Activated CD4-positive, alpha-beta memory T cell treated with anti-CD3 and anti-CD28 coated beads, Interleukin-2, amount 10 ng/mL, durations not matched to agents 7 days and 5 days (primary cell): ENCODE measurements at regions of chr2 and their contacts with region 1.

Region 1: DNA sequence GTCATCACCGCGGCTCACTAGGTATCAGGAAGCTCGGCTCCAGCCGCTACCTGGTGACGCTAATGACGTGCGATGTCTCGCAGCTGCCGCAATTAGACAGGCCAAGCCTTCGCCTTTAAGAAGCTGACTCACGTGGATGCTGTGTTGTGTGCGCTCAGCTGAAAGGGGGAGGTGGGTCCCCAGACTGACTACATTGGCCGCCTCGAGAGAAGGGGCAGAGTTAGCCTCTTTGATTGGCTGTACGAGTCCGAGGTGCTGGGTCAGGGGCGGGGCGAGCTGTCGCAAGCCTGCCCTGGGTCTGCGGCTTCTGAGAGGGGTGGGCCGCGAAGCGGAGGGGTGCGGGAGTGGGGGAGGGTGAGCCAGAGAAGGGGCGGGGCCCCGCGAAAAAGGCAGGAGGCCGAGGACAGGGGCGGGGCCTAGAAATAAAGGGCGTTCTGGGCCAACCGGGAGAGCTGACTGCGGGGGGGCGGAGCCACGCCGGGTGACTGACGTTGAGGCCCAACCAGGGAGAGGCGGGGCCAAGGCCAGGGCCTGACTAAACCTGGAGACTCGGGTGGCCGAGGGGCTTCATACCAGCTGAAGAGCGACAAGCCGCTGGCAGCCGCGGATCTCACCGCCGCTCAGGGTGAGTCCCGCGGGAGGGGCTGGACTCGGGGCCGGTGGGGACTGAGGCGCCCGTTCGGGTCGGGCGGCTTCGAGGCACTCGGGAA is at the start of gene YPEL5:
- DNase-seq: peak; percentile 99
- H3K4me3 Mint-ChIP-seq: peak within 1 kb of the TSS; percentile 81
- H3K27ac Mint-ChIP-seq: peak within 1 kb of the TSS; percentile 93
- H3K4me1 Mint-ChIP-seq: peaks cover 40% of the 10 kb centered on the region
- H3K27me3 Mint-ChIP-seq: no peaks in the 10 kb centered on the region
- total RNA-seq, gene YPEL5: 51.2 to 52.9 TPM

Region 2: DNA sequence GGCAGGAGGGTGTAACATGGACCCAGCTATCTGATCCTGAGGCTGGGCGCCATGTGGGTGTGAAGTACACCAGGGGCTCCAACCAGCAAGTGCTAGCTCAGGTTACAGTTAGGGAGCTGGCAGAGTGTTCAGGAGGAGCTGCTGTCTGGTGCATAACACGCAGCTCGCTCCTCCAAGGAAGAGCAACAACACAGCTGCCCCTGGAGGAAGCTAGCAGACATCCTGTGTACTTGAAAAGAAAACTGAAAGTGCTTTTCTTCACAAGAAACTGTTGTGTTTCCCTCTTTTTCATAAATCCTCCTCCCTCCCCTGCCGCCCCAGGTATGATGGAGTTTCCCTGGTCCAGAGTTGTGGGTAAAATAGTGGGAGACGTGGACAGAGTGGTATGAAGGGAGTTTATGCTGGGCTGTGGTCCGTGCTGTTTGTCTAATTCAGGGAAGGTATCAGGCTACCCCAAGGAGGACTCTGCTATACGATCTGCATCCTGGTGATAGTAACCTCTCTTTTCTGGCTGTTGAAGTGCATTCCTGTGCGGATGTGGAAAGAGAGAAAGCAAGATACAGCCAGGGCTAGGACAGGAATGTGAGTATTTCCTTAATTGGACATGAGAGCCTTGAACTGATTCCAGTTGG is 78.7 kb after region 1 on chr2:
- CTCF ChIA-PET with region 1: interaction called, 5 read pairs
- POLR2A ChIA-PET with region 1: interaction called, 30 read pairs
- DNase-seq: peak; percentile 59
- H3K4me3 Mint-ChIP-seq: peak overlapping the region; percentile 95
- H3K27ac Mint-ChIP-seq: peak overlapping the region; percentile 93
- H3K4me1 Mint-ChIP-seq: peaks cover 59% of the 10 kb centered on the region
- H3K27me3 Mint-ChIP-seq: peaks cover 5% of the 10 kb centered on the region